Activated CD4-positive, alpha-beta T cell treated with anti-CD3 and anti-CD28 coated beads for 36 hours (primary cell): ENCODE measurements at regions of chr5 and their contacts with region 1.

Region 1: DNA sequence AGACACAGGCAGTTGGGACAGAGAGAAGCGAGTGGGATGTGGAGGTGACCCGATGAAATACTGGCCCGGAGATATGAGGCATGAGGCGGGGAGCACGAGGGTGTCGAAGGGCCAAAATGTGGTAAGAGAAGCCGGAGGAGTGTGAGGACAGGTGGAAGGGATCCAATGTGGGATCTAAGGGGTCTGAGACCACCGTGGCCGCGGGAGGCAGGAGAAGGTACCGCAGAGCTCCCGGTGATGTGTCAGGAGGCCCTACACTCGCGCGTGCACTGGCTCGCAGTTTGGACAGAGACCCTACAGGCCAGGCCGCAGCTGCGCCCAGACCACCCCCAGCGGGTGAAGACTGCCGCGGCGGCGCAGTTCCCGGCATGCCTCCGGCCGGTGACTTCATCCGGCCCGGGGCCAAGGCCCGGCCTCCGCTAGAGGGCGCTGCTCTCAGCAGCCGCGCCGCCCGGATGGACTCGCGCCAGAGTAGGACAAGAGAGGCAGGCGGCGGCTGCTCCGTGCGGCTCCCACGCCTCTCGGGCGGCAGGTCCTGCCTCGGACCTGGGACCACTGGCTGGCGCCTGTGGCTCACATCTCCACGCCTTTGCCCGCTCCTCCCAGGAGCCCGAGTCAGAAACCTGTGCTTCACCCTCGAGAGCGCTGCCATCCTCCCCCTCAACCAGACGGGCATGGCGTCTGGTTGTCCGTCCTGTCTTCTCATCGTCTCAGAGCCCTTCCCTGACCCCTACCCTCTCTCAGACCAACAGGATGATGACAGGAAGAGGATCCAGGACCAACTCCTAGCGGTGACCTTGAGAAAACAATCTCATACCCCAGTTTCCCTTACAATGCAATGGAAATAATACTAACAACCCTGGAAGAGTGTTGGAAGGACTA is 35.4 kb upstream of the STING1 start:
- DNase-seq: peak; percentile 95
- ATAC-seq: peak; percentile 91
- H3K4me3 Mint-ChIP-seq: peak overlapping the region; percentile 72
- H3K27ac Mint-ChIP-seq: peak overlapping the region; percentile 91
- H3K4me1 Mint-ChIP-seq: peaks cover 30% of the 10 kb centered on the region
- H3K27me3 Mint-ChIP-seq: no peaks in the 10 kb centered on the region

Region 2: DNA sequence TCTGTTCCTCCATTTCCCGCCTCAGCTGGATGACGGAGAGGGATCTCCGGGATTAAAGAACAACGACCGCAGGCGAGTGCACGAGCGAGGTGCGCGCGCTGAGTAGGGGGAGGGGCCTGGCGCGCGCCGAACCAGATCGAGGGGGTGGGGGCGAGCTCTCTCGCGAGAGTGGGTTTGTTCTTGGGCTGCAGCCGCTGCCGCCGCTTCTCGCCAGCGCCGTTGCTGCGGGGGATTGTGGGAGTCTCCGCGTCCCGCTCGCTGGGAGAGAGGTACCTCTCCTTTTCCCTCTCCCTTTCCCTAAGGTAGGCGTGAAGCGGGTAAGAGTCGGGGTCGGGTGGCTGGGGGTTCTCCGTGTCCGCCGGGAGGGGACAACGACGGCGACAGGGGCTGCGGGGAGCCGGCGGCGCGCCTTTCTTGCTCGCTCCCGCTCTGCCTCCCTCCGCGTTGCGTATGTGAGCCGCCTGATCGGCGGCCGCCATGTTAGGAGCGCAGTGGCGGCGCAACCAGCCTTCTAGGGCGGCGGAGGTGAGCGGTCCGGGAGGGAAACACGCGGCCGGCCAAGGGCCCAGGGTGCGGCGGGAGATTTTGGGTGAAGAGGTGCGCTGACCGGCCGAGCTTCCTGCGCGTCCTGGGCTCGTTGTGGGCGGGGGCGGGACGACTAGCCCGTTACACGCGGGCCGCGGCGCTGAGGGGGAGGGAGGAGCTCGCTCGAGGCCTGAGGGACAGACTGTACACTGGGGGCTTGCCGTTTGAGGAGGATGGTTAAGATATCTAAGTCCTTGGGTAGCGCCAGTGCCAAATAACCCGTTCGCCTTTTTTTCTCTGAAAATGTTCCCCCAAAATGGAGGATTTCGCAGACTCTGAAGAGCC is 224.2 kb before region 1 on chr5 and contains the start of gene MATR3:
- CTCF ChIA-PET with region 1: interaction called, 3 read pairs
- POLR2A ChIA-PET with region 1: no interaction called
- intact Hi-C with region 1: loop called in 1 of 2 experiments (anchors 5 kb)
- DNase-seq: peak; percentile 98
- ATAC-seq: peak; percentile 92
- H3K4me3 Mint-ChIP-seq: peak within 1 kb of the TSS; percentile 97
- H3K27ac Mint-ChIP-seq: peak within 1 kb of the TSS; percentile 99
- H3K4me1 Mint-ChIP-seq: peaks cover 37% of the 10 kb centered on the region
- H3K27me3 Mint-ChIP-seq: no peaks in the 10 kb centered on the region
- total RNA-seq, gene MATR3: 113 to 133 TPM

Region 3: DNA sequence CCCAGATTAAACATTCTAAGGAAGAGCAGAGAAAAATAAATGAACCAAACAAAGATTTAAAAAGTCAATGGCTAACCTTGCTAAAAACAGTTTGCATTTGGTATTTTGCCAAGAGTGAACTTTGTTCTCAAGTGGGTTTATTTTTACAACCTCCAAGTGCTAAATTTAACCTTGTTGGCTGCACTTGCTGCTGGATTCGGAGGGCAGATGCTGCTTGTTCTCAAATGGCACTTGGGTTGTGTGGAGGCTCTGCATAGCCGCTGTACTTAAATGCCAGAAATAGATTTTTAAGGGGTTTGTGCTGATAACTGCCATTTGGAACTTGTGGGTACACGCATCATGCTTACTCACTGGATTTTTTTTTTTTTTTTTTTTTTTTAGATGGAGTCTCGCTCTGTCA is 100.7 kb before region 1 on chr5:
- CTCF ChIA-PET with region 1: interaction called, 254 read pairs
- POLR2A ChIA-PET with region 1: interaction called, 9 read pairs
- intact Hi-C with region 1: loop called (anchors 1 kb)
- DNase-seq: no peak
- ATAC-seq: no peak
- H3K4me3 Mint-ChIP-seq: no peak overlapping the region
- H3K27ac Mint-ChIP-seq: peak overlapping the region; percentile 98
- H3K4me1 Mint-ChIP-seq: peaks cover 50% of the 10 kb centered on the region
- H3K27me3 Mint-ChIP-seq: no peaks in the 10 kb centered on the region

Region 4: GRCh38 chr5:139431706-139432105 is 86.2 kb before region 1 on chr5:
- CTCF ChIA-PET with region 1: interaction called, 21 read pairs
- POLR2A ChIA-PET with region 1: interaction called, 3 read pairs
- intact Hi-C with region 1: no loop called
- DNase-seq: no peak
- ATAC-seq: no peak
- H3K4me3 Mint-ChIP-seq: no peak overlapping the region
- H3K27ac Mint-ChIP-seq: no peak overlapping the region
- H3K4me1 Mint-ChIP-seq: peaks cover 15% of the 10 kb centered on the region
- H3K27me3 Mint-ChIP-seq: no peaks in the 10 kb centered on the region

Region 5: GRCh38 chr5:139461698-139462097 is 56.2 kb before region 1 on chr5:
- CTCF ChIA-PET with region 1: no interaction called
- POLR2A ChIA-PET with region 1: no interaction called
- intact Hi-C with region 1: no loop called
- DNase-seq: no peak
- ATAC-seq: no peak
- H3K4me3 Mint-ChIP-seq: no peak overlapping the region
- H3K27ac Mint-ChIP-seq: peak overlapping the region; percentile 7
- H3K4me1 Mint-ChIP-seq: peaks cover 47% of the 10 kb centered on the region
- H3K27me3 Mint-ChIP-seq: no peaks in the 10 kb centered on the region

Region 6: DNA sequence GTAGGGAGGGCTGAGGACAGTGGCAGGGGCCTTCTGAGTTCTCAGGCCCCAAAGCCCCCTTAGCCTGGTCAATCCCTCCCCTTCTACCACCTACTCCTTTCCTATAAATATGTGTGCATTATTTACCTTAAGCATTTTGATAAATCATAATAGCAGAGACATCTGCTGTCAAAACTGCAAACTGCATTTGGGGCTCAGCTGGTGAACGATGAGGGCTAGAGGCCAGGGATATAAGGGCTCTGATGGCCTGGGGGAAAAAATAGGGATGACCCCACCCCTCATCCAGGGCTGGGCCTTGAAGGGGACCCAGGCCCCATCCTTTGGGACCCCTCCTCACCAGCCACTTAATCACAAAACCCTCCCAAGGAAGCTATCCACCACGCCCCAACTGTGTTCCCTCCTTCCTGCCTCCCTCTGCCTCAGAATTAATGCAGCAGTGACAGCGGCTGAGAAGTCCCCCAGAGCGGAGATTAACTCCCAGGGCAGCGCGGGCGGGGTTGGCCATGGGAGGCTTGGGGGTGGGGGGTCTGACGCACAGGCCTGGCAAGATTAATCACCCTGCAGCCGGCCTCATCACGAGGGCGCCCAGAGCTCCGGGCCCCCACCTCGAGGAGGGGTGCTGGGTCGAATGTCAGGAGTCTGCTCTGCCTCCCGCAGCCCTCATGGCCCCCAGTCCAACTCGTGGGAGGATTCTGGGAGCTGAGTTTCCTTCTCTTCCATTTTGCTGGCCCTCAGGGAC is 172.3 kb after region 1 on chr5:
- CTCF ChIA-PET with region 1: interaction called, 4 read pairs
- POLR2A ChIA-PET with region 1: no interaction called
- intact Hi-C with region 1: loop called in 1 of 2 experiments (anchors 1 kb)
- DNase-seq: peak; percentile 38
- ATAC-seq: peak; percentile 57
- H3K4me3 Mint-ChIP-seq: no peak overlapping the region
- H3K27ac Mint-ChIP-seq: no peak overlapping the region
- H3K4me1 Mint-ChIP-seq: no peaks in the 10 kb centered on the region
- H3K27me3 Mint-ChIP-seq: no peaks in the 10 kb centered on the region

Region 7: DNA sequence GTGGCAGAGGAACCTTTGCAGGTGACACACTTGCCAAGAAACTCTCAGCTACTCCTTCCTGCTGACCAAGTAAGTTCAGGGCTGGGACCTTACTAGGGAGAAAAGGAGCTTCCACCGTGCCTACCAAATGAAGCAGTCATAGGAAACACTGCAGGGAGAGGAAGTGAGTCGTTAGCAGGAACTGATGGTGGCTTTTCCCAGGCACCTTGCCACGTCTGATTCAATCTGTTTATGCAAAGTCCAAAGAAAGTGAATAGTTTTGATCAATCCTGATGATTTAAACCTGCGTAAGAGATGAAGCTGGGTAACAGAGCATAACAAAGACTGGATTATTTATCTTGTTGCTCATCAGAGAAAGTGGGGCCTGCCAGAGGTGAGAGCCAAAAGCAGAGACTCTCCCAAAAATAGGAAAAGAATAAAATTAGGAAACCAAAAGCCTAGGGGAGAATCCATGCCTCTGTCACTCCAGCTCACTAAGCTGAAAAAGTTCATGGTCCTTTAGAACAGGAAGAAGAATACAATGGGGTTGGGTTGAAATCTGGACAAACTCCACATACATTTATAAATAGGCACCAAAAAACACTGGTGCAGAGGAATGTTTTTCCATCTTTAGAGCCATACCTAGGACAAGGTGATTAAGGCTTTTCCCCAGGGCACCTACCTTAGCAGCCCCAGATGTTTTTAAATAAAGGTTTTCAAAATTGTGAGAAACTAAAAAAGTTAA is 794.3 kb after region 1 on chr5:
- CTCF ChIA-PET with region 1: no interaction called
- POLR2A ChIA-PET with region 1: no interaction called
- intact Hi-C with region 1: no loop called
- DNase-seq: no peak
- ATAC-seq: peak; percentile 36
- H3K4me3 Mint-ChIP-seq: no peak overlapping the region
- H3K27ac Mint-ChIP-seq: no peak overlapping the region
- H3K4me1 Mint-ChIP-seq: peaks cover 4% of the 10 kb centered on the region
- H3K27me3 Mint-ChIP-seq: peaks cover 5% of the 10 kb centered on the region